ENCODE measurements at regions of chr2 and their contacts with region 1.

Region 1: DNA sequence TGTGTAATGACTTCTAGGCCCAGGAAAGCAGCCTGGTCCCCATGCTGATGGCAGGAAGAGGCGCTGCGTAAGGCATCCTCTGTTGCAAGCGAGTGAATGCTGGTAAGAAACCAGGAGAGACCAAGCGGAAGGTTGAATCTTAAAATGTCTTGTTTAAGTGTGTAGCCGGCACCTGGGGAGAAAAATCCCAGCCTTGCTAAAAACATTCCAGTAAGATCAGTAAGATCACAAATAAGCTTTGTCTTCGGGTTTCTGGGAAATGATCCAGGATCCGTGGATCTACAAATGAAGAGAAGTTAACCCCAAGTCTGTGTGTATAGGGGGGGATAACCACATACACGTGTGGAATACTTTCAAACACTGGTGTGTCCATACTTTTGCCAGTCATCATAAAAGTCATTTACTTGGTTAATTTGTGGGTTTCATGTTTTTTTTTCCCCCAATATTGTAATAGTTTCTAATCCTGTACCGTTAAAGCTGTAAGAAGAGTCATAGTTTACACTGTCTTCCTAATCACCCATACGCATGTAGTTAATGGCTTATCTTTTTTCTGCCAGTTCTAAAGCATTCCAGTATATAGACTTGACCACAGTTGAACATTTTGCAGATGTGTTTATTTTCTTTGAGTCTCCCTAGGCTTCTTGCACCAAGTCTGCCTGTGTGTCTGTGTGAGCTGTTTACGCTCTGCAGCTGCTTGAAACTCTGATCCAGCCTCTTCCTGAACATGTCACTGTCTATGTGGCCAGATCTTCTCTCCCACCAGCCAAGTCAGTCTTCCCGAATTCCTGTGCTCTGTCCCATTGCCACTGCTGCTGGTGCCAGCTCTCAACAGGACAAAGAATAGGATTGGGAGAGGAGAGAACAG is 135.9 kb upstream of the ARL4C start:
- DNase-seq: peak; percentile 98
- H3K4me3 ChIP-seq: no peak overlapping the region
- H3K27ac ChIP-seq: peak overlapping the region; percentile 96
- H3K27me3 ChIP-seq: no peaks in the 10 kb centered on the region
- CTCF ChIP-seq: no peak

Region 2: GRCh38 chr2:234595829-234596228 is 36.9 kb before region 1 on chr2:
- CTCF ChIA-PET with region 1: no interaction called
- POLR2A ChIA-PET with region 1: interaction called, 13 read pairs
- DNase-seq: peak; percentile 86
- H3K4me3 ChIP-seq: no peak overlapping the region
- H3K27ac ChIP-seq: peak overlapping the region; percentile 87
- H3K27me3 ChIP-seq: no peaks in the 10 kb centered on the region
- CTCF ChIP-seq: no peak

Region 3: GRCh38 chr2:234674781-234675201 is 42.0 kb after region 1 on chr2:
- CTCF ChIA-PET with region 1: no interaction called
- POLR2A ChIA-PET with region 1: interaction called, 14 read pairs
- DNase-seq: no peak
- H3K4me3 ChIP-seq: no peak overlapping the region
- H3K27ac ChIP-seq: peak overlapping the region; percentile 90
- H3K27me3 ChIP-seq: no peaks in the 10 kb centered on the region
- CTCF ChIP-seq: no peak

Region 4: DNA sequence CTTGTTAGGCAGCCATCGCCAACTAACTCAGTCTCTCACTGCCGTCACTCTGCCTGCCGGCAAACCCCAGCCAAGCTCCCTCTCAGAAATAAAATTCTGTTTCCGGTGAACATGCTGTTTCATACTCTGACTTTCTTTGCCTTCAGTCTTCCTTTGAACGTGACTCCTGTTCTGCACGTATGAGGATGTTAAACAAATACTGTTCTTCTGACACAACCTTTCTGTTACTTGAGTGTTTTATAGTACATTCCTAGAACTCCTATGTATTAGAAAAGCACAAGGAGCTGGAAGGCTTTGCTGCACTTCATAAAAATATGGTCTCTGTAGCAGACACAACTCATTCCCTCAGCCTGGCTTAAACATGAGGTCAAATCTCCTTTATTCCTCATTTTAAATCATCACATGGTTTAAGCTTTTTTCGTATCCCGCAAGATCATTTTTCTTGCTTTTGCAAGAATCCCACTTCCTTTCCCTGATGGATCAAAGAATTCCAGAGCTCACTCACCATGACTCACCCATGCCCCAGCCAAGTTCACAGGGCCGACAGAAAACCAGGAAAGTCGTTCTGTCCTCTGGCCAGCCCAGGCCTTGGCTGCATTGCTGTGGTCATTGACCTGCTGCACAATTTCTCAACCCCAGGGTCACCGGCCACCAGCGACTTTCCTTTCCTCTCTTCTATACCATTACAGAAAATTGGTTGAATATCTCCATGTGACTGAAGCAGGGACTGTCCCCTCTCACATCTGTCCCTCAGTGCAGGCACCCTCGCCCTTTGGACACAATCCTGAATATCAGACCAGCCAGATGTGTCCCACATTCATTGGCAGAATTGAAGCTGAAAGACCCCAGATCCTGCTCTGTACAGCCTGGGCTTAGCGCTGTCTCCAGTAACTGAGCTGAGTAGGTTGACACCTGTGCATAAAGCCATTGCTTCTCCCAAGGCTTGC is 47.3 kb after region 1 on chr2:
- CTCF ChIA-PET with region 1: no interaction called
- POLR2A ChIA-PET with region 1: interaction called, 14 read pairs
- DNase-seq: peak; percentile 94
- H3K4me3 ChIP-seq: peak overlapping the region; percentile 17
- H3K27ac ChIP-seq: peak overlapping the region; percentile 98
- H3K27me3 ChIP-seq: no peaks in the 10 kb centered on the region
- CTCF ChIP-seq: no peak

Region 5: GRCh38 chr2:234950730-234951663 is 318.2 kb after region 1 on chr2:
- CTCF ChIA-PET with region 1: no interaction called
- POLR2A ChIA-PET with region 1: interaction called, 13 read pairs
- DNase-seq: no peak
- H3K4me3 ChIP-seq: peak overlapping the region; percentile 67
- H3K27ac ChIP-seq: peak overlapping the region; percentile 94
- H3K27me3 ChIP-seq: no peaks in the 10 kb centered on the region
- CTCF ChIP-seq: no peak